AG04450 (cell line): ENCODE measurements at regions of chr17 and their contacts with region 1.

Region 1: DNA sequence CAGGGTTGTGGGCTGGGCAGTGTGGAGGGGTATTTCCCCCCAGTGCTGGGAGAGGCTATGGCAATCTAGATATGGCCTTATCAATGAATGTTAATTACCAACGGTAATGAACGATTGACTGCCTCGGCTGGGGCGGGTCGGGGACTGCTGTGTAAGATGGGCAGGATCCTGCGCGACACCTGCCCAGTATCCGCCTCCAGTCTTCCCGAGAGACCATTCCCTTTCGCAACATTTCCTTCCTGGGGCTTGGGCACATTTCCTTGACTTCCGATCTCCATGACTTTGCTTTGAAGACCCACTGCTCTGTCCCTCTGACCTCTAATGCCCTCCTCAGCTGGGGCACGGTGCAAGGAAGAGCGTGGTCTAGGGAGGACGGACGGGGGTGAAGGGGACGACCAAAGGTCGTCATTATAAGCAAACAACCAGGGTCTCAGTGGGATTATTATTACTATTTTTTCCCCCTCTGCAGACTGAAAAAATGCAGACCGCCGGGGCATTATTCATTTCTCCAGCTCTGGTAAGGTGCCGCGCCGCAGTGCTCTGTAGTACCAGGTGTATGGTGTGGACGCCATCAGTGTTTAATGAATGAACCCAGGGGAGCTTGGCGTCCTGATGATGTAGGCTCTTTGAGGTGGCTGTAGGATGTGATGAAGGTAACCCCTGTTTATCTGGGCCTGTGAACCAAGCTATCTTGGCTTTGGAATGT is 506 bp downstream of the ATP5MC1 start:
- DNase-seq: no peak
- H3K4me3 ChIP-seq: peak overlapping the region; percentile 99
- H3K27ac ChIP-seq: peak overlapping the region; percentile 57
- H3K27me3 ChIP-seq: no peaks in the 10 kb centered on the region
- CTCF ChIP-seq: no peak

Region 2: GRCh38 chr17:48791128-48792032 is 101.7 kb before region 1 on chr17:
- CTCF ChIA-PET with region 1: no interaction called
- POLR2A ChIA-PET with region 1: no interaction called
- DNase-seq: peak; percentile 55
- H3K4me3 ChIP-seq: no peak overlapping the region
- H3K27ac ChIP-seq: no peak overlapping the region
- H3K27me3 ChIP-seq: peaks cover 42% of the 10 kb centered on the region
- CTCF ChIP-seq: peak; percentile 91

Region 3: DNA sequence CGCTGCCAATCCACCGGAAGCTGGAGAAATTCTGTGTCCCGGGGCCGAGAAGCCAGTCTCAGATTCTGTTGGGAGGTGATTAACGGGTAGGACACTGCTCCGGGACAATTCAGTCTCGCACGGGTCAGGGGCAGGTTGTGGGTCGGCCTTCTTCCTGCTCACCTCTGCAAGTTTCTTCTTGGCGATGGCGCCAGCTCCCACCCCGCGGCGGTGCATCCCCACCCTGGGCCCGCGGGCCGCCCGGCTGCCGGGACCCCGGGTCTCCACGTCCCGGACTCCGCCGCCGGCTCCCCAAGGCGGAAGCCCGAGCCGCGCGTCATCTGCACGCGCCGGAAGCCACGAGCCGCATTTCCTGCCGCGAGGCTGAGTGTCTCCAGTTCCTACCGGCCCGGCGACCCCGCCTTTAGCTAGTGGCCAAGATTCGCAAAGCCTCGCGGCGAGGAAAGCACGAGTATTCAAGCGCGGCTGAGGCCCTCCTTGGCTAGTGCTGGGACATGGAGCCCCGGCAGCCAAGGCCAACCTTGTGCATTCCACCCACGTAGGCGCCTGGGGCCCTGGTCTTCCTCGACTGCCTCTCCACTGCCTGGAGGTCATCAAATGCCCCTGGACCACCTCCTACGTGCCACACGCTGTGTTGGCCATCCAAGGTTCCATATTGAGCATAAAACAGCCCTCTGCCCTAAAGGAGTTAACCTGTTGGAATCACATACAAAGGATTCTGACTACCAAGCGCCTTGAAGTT is 51.6 kb after region 1 on chr17 and contains the start of gene SNF8:
- CTCF ChIA-PET with region 1: no interaction called
- POLR2A ChIA-PET with region 1: interaction called, 12 read pairs
- DNase-seq: peak; percentile 69
- H3K4me3 ChIP-seq: peak within 1 kb of the TSS; percentile 95
- H3K27ac ChIP-seq: peak within 1 kb of the TSS; percentile 91
- H3K27me3 ChIP-seq: no peaks in the 10 kb centered on the region
- CTCF ChIP-seq: no peak
- polyA plus RNA-seq, gene SNF8: 116 and 119 TPM in 2 replicates

Region 4: GRCh38 chr17:49414622-49415350 is 521.7 kb after region 1 on chr17 and contains the start of gene PHB1:
- CTCF ChIA-PET with region 1: no interaction called
- POLR2A ChIA-PET with region 1: interaction called, 10 read pairs
- DNase-seq: peak; percentile 91
- H3K4me3 ChIP-seq: peak within 1 kb of the TSS; percentile 100
- H3K27ac ChIP-seq: no peak within 1 kb of the TSS
- H3K27me3 ChIP-seq: no peaks in the 10 kb centered on the region
- CTCF ChIP-seq: no peak
- polyA plus RNA-seq, gene PHB1: 228 and 263 TPM in 2 replicates